Dendritic cell treated with granulocyte-macrophage colony-stimulating factor and Interleukin-4, amounts not matched to agents 40 ng/mL and 50 ng/mL, for 4 days (primary cell): ENCODE measurements at regions of chr3 and their contacts with region 1.

Region 1: DNA sequence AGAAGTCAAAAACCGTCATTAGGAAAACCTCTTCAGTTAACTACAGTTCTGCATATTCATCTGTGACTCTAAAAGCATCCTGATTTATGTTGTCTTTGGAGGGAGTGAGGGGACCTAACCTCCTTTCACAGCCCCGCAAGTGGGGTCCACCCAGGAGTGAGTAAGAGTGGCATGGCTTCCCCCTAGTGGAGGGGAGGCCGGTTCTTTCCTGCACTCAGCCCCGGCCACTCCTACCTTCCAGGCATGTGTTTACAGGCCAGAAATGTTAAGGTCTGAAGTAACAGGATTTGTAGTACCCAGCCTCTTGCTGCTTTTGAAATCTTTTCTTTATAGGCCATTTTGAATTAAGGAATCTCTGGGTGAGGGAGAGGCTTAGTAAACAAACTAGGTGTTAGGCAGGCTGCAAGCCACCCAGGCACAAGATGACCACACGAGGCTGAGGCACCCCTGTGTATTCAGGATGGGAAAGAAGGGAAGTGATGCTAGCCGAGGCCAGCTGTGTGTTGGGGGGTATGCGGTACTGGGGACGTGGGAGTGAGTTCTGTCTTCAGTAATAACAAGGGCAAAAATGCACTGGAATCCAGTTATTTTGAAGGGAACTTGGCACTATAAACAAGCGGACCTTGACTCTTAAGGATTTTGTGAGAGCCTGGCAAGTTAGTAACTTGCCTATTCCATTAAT is 50.5 kb downstream of the CTDSPL start:
- H3K4me3 Mint-ChIP-seq: no peak overlapping the region
- H3K27ac Mint-ChIP-seq: peak overlapping the region; percentile 73
- H3K4me1 Mint-ChIP-seq: peaks cover 49% of the 10 kb centered on the region
- H3K27me3 Mint-ChIP-seq: no peaks in the 10 kb centered on the region

Region 2: GRCh38 chr3:37956723-37957528 is 44.7 kb after region 1 on chr3:
- intact Hi-C with region 1: no loop called
- H3K4me3 Mint-ChIP-seq: no peak overlapping the region
- H3K27ac Mint-ChIP-seq: peak overlapping the region; percentile 79
- H3K4me1 Mint-ChIP-seq: peaks cover 30% of the 10 kb centered on the region
- H3K27me3 Mint-ChIP-seq: no peaks in the 10 kb centered on the region

Region 3: DNA sequence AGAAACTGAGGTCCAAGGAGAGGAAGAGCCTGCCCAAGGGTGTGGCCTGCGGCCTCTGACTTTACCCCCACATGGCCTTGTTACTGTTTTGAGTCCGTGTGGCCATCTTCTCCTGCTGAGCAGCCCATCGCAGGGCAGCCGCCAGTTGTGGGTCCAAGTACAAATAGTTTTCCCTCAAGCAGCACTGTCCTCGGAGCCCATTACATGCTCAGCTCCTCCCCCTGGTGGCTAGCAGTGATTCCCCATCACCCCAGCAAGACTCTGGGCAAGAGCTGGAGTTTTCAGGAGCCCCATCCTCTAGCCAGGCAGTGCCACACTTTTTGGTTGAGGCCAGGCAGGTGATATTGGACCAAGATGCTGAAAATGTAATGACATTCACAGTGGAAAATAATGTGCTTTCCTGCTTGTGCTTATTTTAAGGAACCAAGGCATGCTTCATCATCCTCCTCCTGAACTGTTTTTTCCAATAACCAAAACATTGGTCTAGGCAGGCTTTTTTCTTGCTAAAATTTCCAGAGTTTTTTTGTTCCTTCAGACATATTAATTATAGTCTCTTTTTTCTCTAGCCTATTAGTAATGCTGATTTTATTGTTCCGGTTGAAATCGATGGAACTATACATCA is 55.2 kb after region 1 on chr3:
- intact Hi-C with region 1: loop called (anchors 5 kb)
- H3K4me3 Mint-ChIP-seq: no peak overlapping the region
- H3K27ac Mint-ChIP-seq: no peak overlapping the region
- H3K4me1 Mint-ChIP-seq: peaks cover 10% of the 10 kb centered on the region
- H3K27me3 Mint-ChIP-seq: no peaks in the 10 kb centered on the region